ENCODE measurements at regions of chr10 and their contacts with region 1.

Region 1: GRCh38 chr10:44965651-44966097 is 6.1 kb downstream of the RASSF4 start:
- DNase-seq: no peak
- ATAC-seq: no peak
- H3K4me3 ChIP-seq: peak overlapping the region in 1 of 3 experiments; percentile 30; a peak in 2 of 6 replicates
- H3K27ac ChIP-seq: peak overlapping the region; percentile 56
- H3K4me1 ChIP-seq: peaks cover 82% of the 10 kb centered on the region
- H3K27me3 ChIP-seq: no peaks in the 10 kb centered on the region
- CTCF ChIP-seq: peak; percentile 29
- EP300 ChIP-seq: no peak
- POLR2A ChIP-seq: no peak
- RAD21 ChIP-seq: no peak

Region 2: DNA sequence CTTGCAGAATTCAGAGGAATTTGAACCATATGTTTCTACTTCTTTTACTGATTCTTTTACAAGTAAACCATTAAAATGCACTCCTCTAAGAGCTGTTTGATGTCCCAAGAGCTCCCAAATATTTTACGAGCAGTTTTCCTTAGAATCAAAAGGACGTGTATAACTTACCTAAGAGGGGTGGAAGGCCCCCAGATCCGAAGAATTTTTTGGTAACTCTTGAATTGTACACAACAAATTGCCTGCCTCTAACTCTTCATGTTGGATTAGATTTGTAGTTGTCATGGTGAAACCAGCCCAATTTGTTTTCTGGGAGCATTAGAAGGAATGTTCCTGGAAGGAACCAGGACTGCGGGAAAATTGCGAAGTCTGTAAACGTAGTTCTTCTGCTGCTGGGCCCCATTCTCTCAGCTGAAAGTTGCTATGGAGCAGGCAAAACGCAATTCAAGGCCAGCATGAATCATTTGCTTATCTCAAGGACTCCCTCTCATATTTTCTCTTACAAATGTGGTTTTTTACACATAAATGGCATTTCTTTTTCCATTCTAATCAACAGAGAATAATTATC is 179.3 kb before region 1 on chr10:
- CTCF ChIA-PET with region 1: no interaction called
- POLR2A ChIA-PET with region 1: no interaction called
- in situ Hi-C with region 1: no loop called
- intact Hi-C with region 1: no loop called
- DNase-seq: no peak
- ATAC-seq: no peak
- H3K4me3 ChIP-seq: no peak overlapping the region
- H3K27ac ChIP-seq: no peak overlapping the region
- H3K4me1 ChIP-seq: no peaks in the 10 kb centered on the region
- H3K27me3 ChIP-seq: peaks cover 0 to 3% of the 10 kb centered on the region in 2 experiments; a peak in 2 of 5 replicates
- CTCF ChIP-seq: no peak
- EP300 ChIP-seq: no peak
- POLR2A ChIP-seq: no peak
- RAD21 ChIP-seq: no peak

Region 3: GRCh38 chr10:44947371-44948152 is 18.1 kb before region 1 on chr10:
- CTCF ChIA-PET with region 1: no interaction called
- POLR2A ChIA-PET with region 1: interaction called, 84 read pairs
- in situ Hi-C with region 1: no loop called
- intact Hi-C with region 1: loop called (anchors 2 kb)
- DNase-seq: no peak
- ATAC-seq: no peak
- H3K4me3 ChIP-seq: no peak overlapping the region
- H3K27ac ChIP-seq: no peak overlapping the region
- H3K4me1 ChIP-seq: peaks cover 75% of the 10 kb centered on the region
- H3K27me3 ChIP-seq: no peaks in the 10 kb centered on the region
- CTCF ChIP-seq: no peak
- EP300 ChIP-seq: no peak
- POLR2A ChIP-seq: no peak
- RAD21 ChIP-seq: no peak

Region 4: GRCh38 chr10:45008524-45009161 is 43.0 kb after region 1 on chr10:
- CTCF ChIA-PET with region 1: no interaction called
- POLR2A ChIA-PET with region 1: no interaction called
- in situ Hi-C with region 1: no loop called
- intact Hi-C with region 1: no loop called
- DNase-seq: peak; percentile 88
- ATAC-seq: peak; percentile 81
- H3K4me3 ChIP-seq: no peak overlapping the region
- H3K27ac ChIP-seq: no peak overlapping the region
- H3K4me1 ChIP-seq: peaks cover 44% of the 10 kb centered on the region
- H3K27me3 ChIP-seq: no peaks in the 10 kb centered on the region
- CTCF ChIP-seq: peak; percentile 87
- EP300 ChIP-seq: no peak
- POLR2A ChIP-seq: no peak
- RAD21 ChIP-seq: peak; percentile 83

Measured in HepG2 (cell line).